ENCODE measurements at regions of chr15 and their contacts with region 1.

Region 1: GRCh38 chr15:76931397-76932007 is at the start of gene RCN2:
- DNase-seq: peak; percentile 93
- H3K4me3 Mint-ChIP-seq: peak within 1 kb of the TSS; percentile 92
- H3K27ac Mint-ChIP-seq: peak within 1 kb of the TSS; percentile 84
- H3K4me1 Mint-ChIP-seq: peaks cover 44% of the 10 kb centered on the region
- H3K27me3 Mint-ChIP-seq: peaks cover 5% of the 10 kb centered on the region
- total RNA-seq, gene RCN2: 39.9 and 42.2 TPM in 2 replicates

Region 2: DNA sequence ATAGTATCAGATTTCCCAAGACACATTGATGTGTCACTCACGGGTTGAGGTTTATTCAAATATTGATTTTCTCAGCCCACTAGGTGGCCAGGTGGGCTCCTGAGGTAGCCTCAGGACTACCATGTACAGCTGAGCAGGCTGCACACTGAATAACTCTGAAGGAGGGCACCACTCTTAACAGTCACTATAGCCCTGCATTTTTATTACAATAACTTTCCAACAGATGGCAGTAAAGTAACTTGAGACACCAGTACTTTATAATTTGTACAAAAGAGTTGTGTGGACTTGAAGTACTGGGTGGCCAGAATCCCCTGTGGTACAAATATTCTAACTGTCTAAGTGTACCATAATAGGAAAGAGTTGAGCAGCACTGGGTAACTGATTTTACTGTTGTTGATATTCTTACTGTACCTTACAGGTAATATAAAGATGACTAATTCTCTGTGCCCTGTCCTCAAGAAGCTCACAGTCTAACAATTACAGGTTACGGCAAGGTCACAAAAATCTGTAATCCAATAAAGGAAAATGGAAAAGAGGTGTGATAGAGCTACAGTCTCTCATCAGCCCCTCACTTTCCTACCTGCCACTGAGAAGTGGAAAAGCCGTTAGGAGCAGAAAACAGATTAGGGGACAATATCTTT is 696.2 kb before region 1 on chr15:
- intact Hi-C with region 1: loop called (anchors 1 kb)
- DNase-seq: no peak
- H3K4me3 Mint-ChIP-seq: no peak overlapping the region
- H3K27ac Mint-ChIP-seq: no peak overlapping the region
- H3K4me1 Mint-ChIP-seq: no peaks in the 10 kb centered on the region
- H3K27me3 Mint-ChIP-seq: no peaks in the 10 kb centered on the region

Region 3: GRCh38 chr15:76311100-76311953 is 620.2 kb before region 1 on chr15 and contains the start of gene ETFA:
- intact Hi-C with region 1: loop called (anchors 1 kb)
- DNase-seq: peak; percentile 88
- H3K4me3 Mint-ChIP-seq: peak within 1 kb of the TSS; percentile 90
- H3K27ac Mint-ChIP-seq: peak within 1 kb of the TSS; percentile 82
- H3K4me1 Mint-ChIP-seq: peaks cover 31% of the 10 kb centered on the region
- H3K27me3 Mint-ChIP-seq: peaks cover 11% of the 10 kb centered on the region
- total RNA-seq, gene ETFA: 129 and 133 TPM in 2 replicates

Region 4: GRCh38 chr15:76866008-76866407 is 65.5 kb before region 1 on chr15:
- intact Hi-C with region 1: no loop called
- DNase-seq: no peak
- H3K4me3 Mint-ChIP-seq: no peak overlapping the region
- H3K27ac Mint-ChIP-seq: no peak overlapping the region
- H3K4me1 Mint-ChIP-seq: peaks cover 19% of the 10 kb centered on the region
- H3K27me3 Mint-ChIP-seq: peaks cover 4% of the 10 kb centered on the region

Region 5: DNA sequence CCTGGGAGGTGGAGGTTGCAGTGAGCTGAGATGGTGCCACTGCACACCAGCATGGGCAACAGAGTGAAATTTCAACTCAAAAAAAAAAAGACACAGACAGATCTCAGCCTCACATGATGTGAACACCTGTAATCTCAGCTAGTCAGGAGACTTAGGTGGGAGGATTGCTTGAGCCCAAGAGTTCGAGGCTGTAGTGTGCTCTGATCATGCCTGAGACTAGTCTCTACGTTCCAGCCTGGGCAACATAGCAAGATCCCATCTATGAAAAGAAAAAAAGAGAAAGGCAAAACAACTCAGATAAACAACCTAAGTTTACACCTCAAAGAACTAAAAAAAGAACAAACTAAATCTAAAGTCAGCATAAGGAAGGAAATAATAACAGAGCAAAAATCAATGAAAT is 37.3 kb before region 1 on chr15:
- intact Hi-C with region 1: no loop called
- DNase-seq: no peak
- H3K4me3 Mint-ChIP-seq: no peak overlapping the region
- H3K27ac Mint-ChIP-seq: no peak overlapping the region
- H3K4me1 Mint-ChIP-seq: peaks cover 10% of the 10 kb centered on the region
- H3K27me3 Mint-ChIP-seq: no peaks in the 10 kb centered on the region

Region 6: DNA sequence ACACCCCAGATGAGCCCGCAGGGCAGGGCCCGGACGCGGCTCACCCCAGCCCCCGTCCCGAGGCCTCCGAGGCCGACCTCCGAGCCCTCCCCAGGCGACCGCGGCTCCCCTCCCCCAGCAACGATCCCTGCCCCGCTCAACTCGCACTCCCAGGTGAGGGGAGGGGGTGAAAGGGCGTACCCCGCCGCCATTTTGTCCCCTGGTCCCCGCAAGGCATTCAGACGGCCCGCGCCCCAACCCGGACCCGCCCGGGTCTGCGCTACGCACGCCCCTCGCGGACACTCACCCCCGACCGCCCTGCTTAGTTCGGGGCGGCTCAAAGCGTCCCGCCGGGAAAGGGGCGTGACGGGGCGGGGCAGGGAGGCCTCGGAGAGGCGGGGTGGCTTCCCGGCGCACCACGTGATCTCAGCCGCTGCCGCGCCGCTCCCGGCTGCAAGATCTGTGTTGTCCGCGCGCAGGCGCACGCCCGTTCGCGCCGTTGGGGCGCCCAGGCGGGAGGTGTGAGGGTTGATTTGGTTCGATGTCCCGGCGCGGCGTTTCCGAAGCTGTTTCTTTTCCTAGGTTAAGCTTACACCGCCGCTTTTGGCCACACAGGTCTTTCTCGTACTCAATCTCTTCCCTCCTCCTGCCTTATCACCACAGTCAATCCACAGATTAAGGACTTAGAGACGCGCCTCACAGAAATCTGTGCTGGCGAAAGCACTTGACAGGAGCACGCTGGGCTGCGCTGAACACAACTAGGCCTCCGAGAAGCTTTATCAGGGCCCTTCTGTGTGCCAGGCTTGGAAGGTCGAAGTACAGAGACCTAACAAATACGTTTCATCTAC is 26.3 kb before region 1 on chr15 and contains the start of gene SCAPER:
- intact Hi-C with region 1: loop called (anchors 1 kb)
- DNase-seq: peak; percentile 88
- H3K4me3 Mint-ChIP-seq: peak within 1 kb of the TSS; percentile 91
- H3K27ac Mint-ChIP-seq: peak within 1 kb of the TSS; percentile 93
- H3K4me1 Mint-ChIP-seq: peaks cover 36% of the 10 kb centered on the region
- H3K27me3 Mint-ChIP-seq: peaks cover 4% of the 10 kb centered on the region
- total RNA-seq, gene SCAPER: 21.5 and 23.5 TPM in 2 replicates

Region 7: GRCh38 chr15:77002954-77003912 is 71.7 kb after region 1 on chr15:
- intact Hi-C with region 1: loop called (anchors 2 kb)
- DNase-seq: peak; percentile 74
- H3K4me3 Mint-ChIP-seq: peak overlapping the region; percentile 80
- H3K27ac Mint-ChIP-seq: peak overlapping the region; percentile 96
- H3K4me1 Mint-ChIP-seq: peaks cover 86% of the 10 kb centered on the region
- H3K27me3 Mint-ChIP-seq: no peaks in the 10 kb centered on the region

Region 8: GRCh38 chr15:77070495-77071304 is 139.2 kb after region 1 on chr15 and contains the start of gene TSPAN3:
- intact Hi-C with region 1: loop called (anchors 1 kb)
- DNase-seq: peak; percentile 91
- H3K4me3 Mint-ChIP-seq: peak within 1 kb of the TSS; percentile 87
- H3K27ac Mint-ChIP-seq: peak within 1 kb of the TSS; percentile 42
- H3K4me1 Mint-ChIP-seq: peaks cover 27% of the 10 kb centered on the region
- H3K27me3 Mint-ChIP-seq: peaks cover 19% of the 10 kb centered on the region
- total RNA-seq, gene TSPAN3: 41.5 and 41.6 TPM in 2 replicates

Measured in activated T-helper 1 cell treated with anti-CD3 and anti-CD28 coated beads, Interleukin-12 subunit alpha, Interleukin-12 subunit beta, Interleukin-2, Interleukin-4 antibody, amounts not matched to agents 30 ng/mL and 10 ng/mL and 1 ng/mL, durations not matched to agents 14 hours and 24 hours and 36 hours (primary cell).